ENCODE measurements at regions of chr3 and their contacts with region 1.

Region 1: GRCh38 chr3:123328851-123329635 is 119.8 kb downstream of the ADCY5 start:
- DNase-seq: peak in 34 of 35 experiments; percentile 5 to 79 (median 60)
- ATAC-seq: peak; percentile 59 to 76 (median 73)
- H3K4me3 ChIP-seq: no peak overlapping the region
- H3K4me3 Mint-ChIP-seq: no peak overlapping the region
- H3K27ac ChIP-seq: no peak overlapping the region
- H3K27ac Mint-ChIP-seq: no peak overlapping the region
- H3K4me1 ChIP-seq: peaks cover 0 to 3% of the 10 kb centered on the region in 2 experiments
- H3K4me1 Mint-ChIP-seq: no peaks in the 10 kb centered on the region
- H3K27me3 ChIP-seq: peaks cover 0 to 17% of the 10 kb centered on the region in 2 experiments
- H3K27me3 Mint-ChIP-seq: peaks cover 0 to 4% of the 10 kb centered on the region in 2 donors

Region 2: DNA sequence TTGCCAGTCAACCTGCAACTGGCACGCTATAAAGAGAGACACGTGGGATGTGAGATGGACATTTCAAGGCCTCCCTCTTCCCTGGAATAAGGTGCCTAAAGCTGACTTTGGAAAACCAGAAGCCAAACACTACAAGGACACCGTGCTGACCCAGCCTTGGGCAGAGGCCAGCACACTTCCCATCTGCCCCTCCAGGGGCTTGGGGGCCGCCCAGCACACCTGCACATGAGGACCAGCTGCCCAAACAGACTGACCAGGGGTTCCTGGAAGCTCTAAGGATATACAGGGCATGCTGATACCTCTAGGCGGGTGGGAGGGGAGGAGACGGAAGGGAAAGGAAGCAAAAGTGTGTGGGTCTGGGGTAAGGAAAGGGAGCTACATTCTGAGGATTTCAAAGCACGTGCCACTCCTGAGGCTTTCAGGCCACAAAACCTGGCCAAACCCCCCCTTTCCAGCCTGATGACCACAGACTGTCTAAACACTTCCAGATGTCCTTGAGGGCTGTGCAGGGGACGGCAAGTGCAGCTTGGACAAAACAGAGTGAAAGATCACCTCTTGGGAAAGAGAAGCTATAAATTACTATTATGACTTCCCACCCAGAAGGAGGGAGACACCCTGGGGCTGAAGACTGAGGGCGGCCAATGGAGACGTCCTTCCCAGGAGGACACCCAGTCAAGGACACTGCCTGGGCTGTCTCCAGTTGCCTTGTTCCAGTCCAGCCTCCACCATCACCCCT is 62.0 kb after region 1 on chr3:
- CTCF ChIA-PET with region 1: no interaction called
- POLR2A ChIA-PET with region 1: no interaction called
- DNase-seq: no peak
- ATAC-seq: no peak
- H3K4me3 ChIP-seq: no peak overlapping the region
- H3K4me3 Mint-ChIP-seq: no peak overlapping the region
- H3K27ac ChIP-seq: no peak overlapping the region
- H3K27ac Mint-ChIP-seq: no peak overlapping the region
- H3K4me1 ChIP-seq: no peaks in the 10 kb centered on the region
- H3K4me1 Mint-ChIP-seq: no peaks in the 10 kb centered on the region
- H3K27me3 ChIP-seq: peaks cover 0 to 45% of the 10 kb centered on the region in 2 experiments
- H3K27me3 Mint-ChIP-seq: peaks cover 30 to 45% of the 10 kb centered on the region in 2 donors

Region 3: GRCh38 chr3:123559040-123559861 is 230.2 kb after region 1 on chr3:
- CTCF ChIA-PET with region 1: interaction called, 9 to 15 read pairs
- POLR2A ChIA-PET with region 1: no interaction called
- DNase-seq: peak in 6 of 35 experiments; percentile 1 to 76 (median 9)
- ATAC-seq: no peak
- H3K4me3 ChIP-seq: no peak overlapping the region
- H3K4me3 Mint-ChIP-seq: no peak overlapping the region
- H3K27ac ChIP-seq: no peak overlapping the region
- H3K27ac Mint-ChIP-seq: no peak overlapping the region
- H3K4me1 ChIP-seq: no peaks in the 10 kb centered on the region
- H3K4me1 Mint-ChIP-seq: peaks cover 2 to 12% (median 11%) of the 10 kb centered on the region in 3 donors
- H3K27me3 ChIP-seq: no peaks in the 10 kb centered on the region
- H3K27me3 Mint-ChIP-seq: no peaks in the 10 kb centered on the region